HepG2 (cell line): ENCODE measurements at regions of chr14 and their contacts with region 1.

Region 1: DNA sequence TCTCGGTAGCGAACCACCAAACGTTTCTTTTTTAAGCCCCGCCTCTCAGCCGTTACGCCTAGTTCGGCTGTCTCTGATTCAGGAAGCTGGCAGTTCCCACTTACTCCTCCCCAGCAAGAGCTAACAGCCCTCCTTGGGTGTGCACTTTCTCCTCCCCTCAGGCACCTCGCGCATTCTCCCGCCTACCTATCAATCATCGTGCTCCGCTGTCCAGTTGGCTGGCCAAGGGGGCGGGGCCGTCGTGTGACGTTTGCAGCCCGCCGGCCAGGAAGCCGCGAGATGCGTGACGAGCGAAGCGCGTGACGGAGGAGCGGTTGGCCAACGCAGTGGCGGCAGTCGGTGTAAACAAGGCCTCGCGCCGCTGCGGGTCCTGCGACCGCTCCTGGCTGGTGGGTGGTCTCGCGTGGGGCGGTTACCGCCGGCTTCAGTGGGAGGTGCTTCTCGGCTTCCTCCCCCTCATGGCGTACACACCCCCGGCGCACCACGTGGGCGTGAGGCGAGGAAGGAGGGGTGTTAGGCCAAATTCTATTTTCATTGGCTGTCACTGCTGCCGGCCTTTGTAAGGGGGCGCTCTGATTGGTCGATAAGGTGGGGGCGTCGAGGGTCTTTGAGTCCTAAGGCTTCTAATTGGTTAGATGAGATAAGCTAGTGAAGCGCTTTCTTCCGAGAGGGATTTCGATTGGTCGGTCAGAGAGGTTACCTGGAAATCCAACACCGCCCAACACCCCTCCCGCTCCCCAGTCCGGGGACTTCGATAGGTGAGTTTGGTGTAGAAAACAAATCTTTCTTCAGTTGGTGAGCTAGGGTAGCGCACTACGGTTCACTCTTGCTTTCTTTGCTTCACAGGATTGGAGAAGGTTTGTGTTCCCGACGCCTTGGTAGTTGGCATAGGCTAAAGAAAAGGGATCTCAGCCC is at the starts of genes DCAF11 and NRL:
- DNase-seq: peak; percentile 100
- ATAC-seq: peak; percentile 88
- H3K4me3 ChIP-seq: peak within 1 kb of the TSS; percentile 66 to 96 (median 85)
- H3K27ac ChIP-seq: peak within 1 kb of the TSS; percentile 98
- H3K4me1 ChIP-seq: peaks cover 48% of the 10 kb centered on the region
- H3K27me3 ChIP-seq: no peaks in the 10 kb centered on the region; a peak in 1 of 5 replicates
- CTCF ChIP-seq: peak; percentile 50
- EP300 ChIP-seq: peak in 1 of 2 experiments; percentile 77; a peak in 2 of 4 replicates
- POLR2A ChIP-seq: peak in 1 of 2 experiments; percentile 97; a peak in 2 of 4 replicates
- RAD21 ChIP-seq: peak; percentile 78
- total RNA-seq, gene DCAF11: 257 and 342 TPM in 2 replicates
- total RNA-seq, gene NRL: 4.7 and 5.2 TPM in 2 replicates

Region 2: GRCh38 chr14:23320774-23321571 is 793.8 kb before region 1 on chr14 and contains the start of gene PABPN1:
- CTCF ChIA-PET with region 1: no interaction called
- POLR2A ChIA-PET with region 1: interaction called, 19 read pairs
- in situ Hi-C with region 1: no loop called
- intact Hi-C with region 1: no loop called
- DNase-seq: peak; percentile 100
- ATAC-seq: peak; percentile 94
- H3K4me3 ChIP-seq: peak within 1 kb of the TSS; percentile 79 to 99 (median 98)
- H3K27ac ChIP-seq: peak within 1 kb of the TSS; percentile 95
- H3K4me1 ChIP-seq: peaks cover 36% of the 10 kb centered on the region
- H3K27me3 ChIP-seq: peaks cover 0 to 6% of the 10 kb centered on the region in 2 experiments; a peak in 2 of 5 replicates
- CTCF ChIP-seq: peak; percentile 10
- EP300 ChIP-seq: peak; percentile 68 to 90; a peak in 3 of 4 replicates
- POLR2A ChIP-seq: peak in 1 of 2 experiments; percentile 91; a peak in 2 of 4 replicates
- RAD21 ChIP-seq: peak; percentile 67
- total RNA-seq, gene PABPN1: 173 and 233 TPM in 2 replicates

Region 3: GRCh38 chr14:23727566-23728335 is 387.0 kb before region 1 on chr14:
- CTCF ChIA-PET with region 1: no interaction called
- POLR2A ChIA-PET with region 1: no interaction called
- in situ Hi-C with region 1: no loop called
- intact Hi-C with region 1: no loop called
- DNase-seq: peak; percentile 90
- ATAC-seq: peak; percentile 88
- H3K4me3 ChIP-seq: no peak overlapping the region
- H3K27ac ChIP-seq: no peak overlapping the region
- H3K4me1 ChIP-seq: peaks cover 6% of the 10 kb centered on the region
- H3K27me3 ChIP-seq: no peaks in the 10 kb centered on the region; a peak in 1 of 5 replicates
- CTCF ChIP-seq: peak; percentile 91
- EP300 ChIP-seq: no peak
- POLR2A ChIP-seq: no peak
- RAD21 ChIP-seq: peak; percentile 90

Region 4: DNA sequence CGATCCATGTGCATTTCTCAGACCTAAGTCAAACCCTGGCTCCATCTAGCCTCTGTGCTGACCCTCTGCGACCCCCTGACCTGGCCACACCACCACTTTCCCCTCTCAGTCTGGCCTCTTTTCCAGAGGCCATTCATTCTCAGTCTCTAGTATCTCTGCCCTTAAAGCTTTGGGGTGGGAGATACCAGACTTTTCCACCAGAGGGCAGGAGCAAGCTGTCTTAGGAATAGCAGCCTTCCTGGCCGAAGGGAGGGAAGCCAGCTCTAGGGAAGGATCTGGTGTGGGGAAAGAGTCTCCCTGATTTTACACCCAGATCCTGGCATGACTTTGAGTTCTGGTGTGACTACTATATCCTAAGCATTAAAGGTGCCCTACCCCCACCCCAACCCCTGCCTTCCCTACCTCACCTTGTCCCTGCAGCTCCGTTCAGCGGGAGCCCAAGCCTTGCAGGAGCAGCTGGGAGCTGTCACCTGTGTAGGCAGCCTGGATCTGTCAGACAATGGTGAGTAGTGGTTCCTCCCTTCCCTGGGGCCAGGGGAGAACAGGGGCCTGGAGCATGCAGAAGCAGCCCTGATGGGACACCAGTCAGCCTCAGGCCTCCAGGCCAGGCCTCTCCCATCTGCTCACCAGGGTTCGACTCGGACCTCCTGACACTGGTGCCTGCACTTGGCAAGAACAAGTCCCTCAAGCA is 56.4 kb before region 1 on chr14:
- CTCF ChIA-PET with region 1: interaction called, 86 read pairs
- POLR2A ChIA-PET with region 1: interaction called, 62 read pairs
- in situ Hi-C with region 1: no loop called
- intact Hi-C with region 1: no loop called
- DNase-seq: peak; percentile 89
- ATAC-seq: peak; percentile 84
- H3K4me3 ChIP-seq: no peak overlapping the region
- H3K27ac ChIP-seq: no peak overlapping the region
- H3K4me1 ChIP-seq: peaks cover 40% of the 10 kb centered on the region
- H3K27me3 ChIP-seq: peaks cover 19 to 48% of the 10 kb centered on the region in 2 experiments; a peak in 4 of 5 replicates
- CTCF ChIP-seq: peak; percentile 99
- EP300 ChIP-seq: no peak
- POLR2A ChIP-seq: no peak
- RAD21 ChIP-seq: peak; percentile 99

Region 5: GRCh38 chr14:24135834-24136542 is 21.2 kb after region 1 on chr14 and contains the start of gene PSME1:
- CTCF ChIA-PET with region 1: interaction called, 3 read pairs
- POLR2A ChIA-PET with region 1: interaction called, 977 read pairs
- in situ Hi-C with region 1: no loop called
- intact Hi-C with region 1: loop called (anchors 1 kb)
- DNase-seq: peak; percentile 93
- ATAC-seq: peak; percentile 86
- H3K4me3 ChIP-seq: peak within 1 kb of the TSS; percentile 91 to 98 (median 93)
- H3K27ac ChIP-seq: peak within 1 kb of the TSS; percentile 75
- H3K4me1 ChIP-seq: peaks cover 64% of the 10 kb centered on the region
- H3K27me3 ChIP-seq: no peaks in the 10 kb centered on the region; a peak in 1 of 5 replicates
- CTCF ChIP-seq: peak; percentile 47; the same call in 1 of the 2 replicates
- EP300 ChIP-seq: peak; percentile 23 to 43; a peak in 1 of 4 replicates
- POLR2A ChIP-seq: peak in 1 of 2 experiments; percentile 31; a peak in 1 of 4 replicates
- RAD21 ChIP-seq: peak; percentile 71
- total RNA-seq, gene PSME1: 608 and 713 TPM in 2 replicates

Region 6: GRCh38 chr14:24195191-24196070 is 80.6 kb after region 1 on chr14 and contains the start of gene TM9SF1:
- CTCF ChIA-PET with region 1: no interaction called
- POLR2A ChIA-PET with region 1: interaction called, 76 read pairs
- in situ Hi-C with region 1: no loop called
- intact Hi-C with region 1: no loop called
- DNase-seq: peak; percentile 93
- ATAC-seq: peak; percentile 94
- H3K4me3 ChIP-seq: peak within 1 kb of the TSS; percentile 79 to 91 (median 85)
- H3K27ac ChIP-seq: peak within 1 kb of the TSS; percentile 84
- H3K4me1 ChIP-seq: peaks cover 65% of the 10 kb centered on the region
- H3K27me3 ChIP-seq: no peaks in the 10 kb centered on the region; a peak in 1 of 5 replicates
- CTCF ChIP-seq: peak; percentile 54
- EP300 ChIP-seq: peak; percentile 7 to 39; a peak in 1 of 4 replicates
- POLR2A ChIP-seq: peak in 1 of 2 experiments; percentile 81; a peak in 2 of 4 replicates
- RAD21 ChIP-seq: peak; percentile 52
- total RNA-seq, gene TM9SF1: 56.4 and 110 TPM in 2 replicates

Region 7: DNA sequence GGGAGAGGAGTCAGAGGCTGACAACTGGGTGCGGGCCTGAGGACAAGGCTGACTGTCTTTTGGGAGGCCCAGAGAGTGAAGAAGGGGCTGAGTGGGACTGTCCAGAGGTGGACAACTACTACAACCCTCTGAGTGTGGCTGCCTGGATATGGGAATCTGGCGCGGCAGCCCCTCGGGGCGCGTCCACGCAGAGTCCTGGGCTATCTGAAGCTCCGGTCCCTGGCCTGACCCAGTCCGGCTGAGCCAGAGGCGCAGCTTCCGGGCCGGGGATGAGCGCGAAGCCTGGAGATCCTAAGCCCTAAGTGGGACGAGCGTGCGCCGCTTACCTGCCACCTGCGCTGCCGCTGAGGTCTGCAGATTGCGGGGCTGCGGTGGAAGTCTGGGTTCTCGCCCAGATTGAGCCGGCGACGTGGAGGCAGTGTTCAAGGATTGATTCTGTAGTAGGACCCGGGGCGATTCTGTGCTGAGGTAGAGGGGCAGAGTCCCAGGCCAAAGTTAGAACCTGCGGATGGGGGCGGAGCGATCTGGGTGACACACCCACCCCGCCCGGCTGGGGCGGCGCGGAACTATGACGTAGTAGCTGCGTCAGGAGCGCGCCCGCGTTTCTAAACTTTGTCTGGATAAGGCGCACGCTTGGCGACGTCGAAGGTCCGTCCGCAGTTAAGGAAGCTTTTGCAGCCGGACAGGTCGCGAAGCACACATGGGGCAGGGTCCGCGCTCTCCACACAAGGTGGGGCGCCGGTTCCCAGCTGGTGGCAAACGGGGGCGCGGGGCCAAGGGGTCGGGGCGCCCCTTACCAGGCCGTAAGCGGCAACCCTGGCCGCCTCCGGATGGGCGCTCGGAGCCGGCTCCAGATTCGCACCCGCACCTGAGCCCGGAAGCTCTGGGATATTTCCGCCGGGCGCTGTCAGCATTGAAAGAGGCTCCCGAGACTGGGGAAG is 184.7 kb after region 1 on chr14 and contains the starts of genes DHRS1 and NOP9:
- CTCF ChIA-PET with region 1: no interaction called
- POLR2A ChIA-PET with region 1: interaction called, 16 read pairs
- in situ Hi-C with region 1: no loop called
- intact Hi-C with region 1: no loop called
- DNase-seq: peak; percentile 93
- ATAC-seq: peak; percentile 80
- H3K4me3 ChIP-seq: peak within 1 kb of the TSS; percentile 79 to 98 (median 89)
- H3K27ac ChIP-seq: peak within 1 kb of the TSS; percentile 83
- H3K4me1 ChIP-seq: peaks cover 45% of the 10 kb centered on the region
- H3K27me3 ChIP-seq: no peaks in the 10 kb centered on the region; a peak in 1 of 5 replicates
- CTCF ChIP-seq: peak; percentile 53
- EP300 ChIP-seq: peak; percentile 63 to 81; a peak in 3 of 4 replicates
- POLR2A ChIP-seq: peak in 1 of 2 experiments; percentile 88; a peak in 2 of 4 replicates
- RAD21 ChIP-seq: peak; percentile 54; the same call in 1 of the 2 replicates
- total RNA-seq, gene DHRS1: 46.3 and 60.8 TPM in 2 replicates
- total RNA-seq, gene NOP9: 61.6 and 64.5 TPM in 2 replicates

Region 8: DNA sequence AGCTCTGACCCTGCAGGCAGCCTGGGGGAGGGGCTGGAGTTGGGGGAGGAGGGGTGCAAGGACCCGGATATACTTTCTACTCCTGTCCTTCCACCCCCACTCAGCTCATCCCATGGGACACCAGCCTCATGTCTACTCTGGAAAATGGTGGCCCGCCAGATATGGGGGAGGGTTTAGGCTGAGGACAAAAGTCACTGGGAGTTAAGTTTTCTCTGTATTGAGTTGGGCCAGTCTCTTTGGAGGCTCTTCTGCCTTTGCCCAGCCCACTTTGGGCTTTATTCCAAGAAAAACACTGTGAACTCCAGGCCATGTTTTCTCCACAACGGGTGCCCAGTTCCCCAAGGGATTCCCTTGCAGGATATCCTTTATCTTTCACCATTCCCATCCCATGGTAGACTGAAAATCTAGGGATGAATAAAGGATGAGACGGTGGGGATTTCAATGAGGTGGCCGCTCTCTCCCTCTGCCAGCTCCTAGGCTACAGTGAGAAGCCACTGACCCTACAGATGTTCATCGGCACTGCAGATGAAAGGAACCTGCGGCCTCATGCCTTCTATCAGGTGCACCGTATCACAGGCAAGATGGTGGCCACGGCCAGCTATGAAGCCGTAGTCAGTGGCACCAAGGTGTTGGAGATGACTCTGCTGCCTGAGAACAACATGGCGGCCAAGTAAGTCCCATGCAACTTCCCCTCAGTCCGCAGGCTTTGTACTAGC is 258.1 kb after region 1 on chr14:
- CTCF ChIA-PET with region 1: no interaction called
- POLR2A ChIA-PET with region 1: no interaction called
- in situ Hi-C with region 1: no loop called
- intact Hi-C with region 1: no loop called
- DNase-seq: no peak
- ATAC-seq: no peak
- H3K4me3 ChIP-seq: no peak overlapping the region
- H3K27ac ChIP-seq: no peak overlapping the region
- H3K4me1 ChIP-seq: peaks cover 10% of the 10 kb centered on the region
- H3K27me3 ChIP-seq: peaks cover 22 to 53% of the 10 kb centered on the region in 2 experiments
- CTCF ChIP-seq: no peak
- EP300 ChIP-seq: no peak
- POLR2A ChIP-seq: no peak
- RAD21 ChIP-seq: no peak